Activated CD4-positive, alpha-beta T cell treated with anti-CD3 and anti-CD28 coated beads, Interleukin-2, amount 10 ng/mL, durations not matched to agents 24 days and 14 days (primary cell): ENCODE measurements at regions of chr5 and their contacts with region 1.

Region 1: GRCh38 chr5:35815089-35815936 is 41.4 kb upstream of the IL7R start:
- DNase-seq: peak; percentile 83
- H3K4me3 Mint-ChIP-seq: no peak overlapping the region
- H3K27ac Mint-ChIP-seq: no peak overlapping the region
- H3K4me1 Mint-ChIP-seq: peaks cover 34% of the 10 kb centered on the region
- H3K27me3 Mint-ChIP-seq: no peaks in the 10 kb centered on the region

Region 2: DNA sequence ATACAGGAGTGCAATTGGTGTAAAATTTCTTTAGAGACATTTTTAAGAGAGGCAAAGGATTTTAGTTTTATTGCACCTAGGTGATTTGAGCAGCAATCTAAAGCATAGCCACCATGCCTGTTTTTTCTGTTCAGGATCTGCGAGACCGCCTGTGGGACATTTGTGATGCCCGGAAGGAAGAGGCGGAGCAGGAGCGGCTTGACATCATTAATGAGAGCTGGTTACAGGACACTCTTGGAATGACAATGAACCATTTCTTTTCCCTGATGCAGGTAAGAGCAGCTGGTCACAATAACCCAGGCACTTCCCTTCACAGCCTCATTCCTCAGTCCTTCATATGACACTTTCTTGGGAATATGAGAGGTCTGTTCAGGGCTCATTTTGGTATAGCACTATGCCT is 61.8 kb before region 1 on chr5:
- intact Hi-C with region 1: no loop called
- DNase-seq: no peak
- H3K4me3 Mint-ChIP-seq: no peak overlapping the region
- H3K27ac Mint-ChIP-seq: no peak overlapping the region
- H3K4me1 Mint-ChIP-seq: peaks cover 9% of the 10 kb centered on the region
- H3K27me3 Mint-ChIP-seq: no peaks in the 10 kb centered on the region

Region 3: DNA sequence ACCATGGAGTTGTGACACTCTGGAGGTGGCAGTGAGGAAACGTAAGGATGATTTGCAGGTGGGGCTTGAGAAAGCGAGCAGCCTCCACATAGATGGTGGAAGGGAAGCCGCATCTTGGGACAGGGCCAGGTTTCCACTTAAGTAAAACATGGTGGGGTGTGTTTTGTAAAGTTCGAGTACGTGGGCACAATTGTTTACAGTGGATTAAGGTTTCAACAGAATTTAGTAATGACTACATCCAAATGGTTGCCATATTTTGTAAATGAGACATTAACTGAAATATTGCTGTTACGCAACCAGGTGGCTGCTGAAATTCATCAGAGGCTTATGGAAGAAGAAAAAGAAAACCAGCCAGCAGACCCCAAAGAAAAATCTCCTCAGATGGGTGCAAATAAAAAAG is 44.0 kb before region 1 on chr5:
- intact Hi-C with region 1: loop called (anchors 1 kb)
- DNase-seq: peak; percentile 40
- H3K4me3 Mint-ChIP-seq: no peak overlapping the region
- H3K27ac Mint-ChIP-seq: no peak overlapping the region
- H3K4me1 Mint-ChIP-seq: peaks cover 20% of the 10 kb centered on the region
- H3K27me3 Mint-ChIP-seq: no peaks in the 10 kb centered on the region

Region 4: DNA sequence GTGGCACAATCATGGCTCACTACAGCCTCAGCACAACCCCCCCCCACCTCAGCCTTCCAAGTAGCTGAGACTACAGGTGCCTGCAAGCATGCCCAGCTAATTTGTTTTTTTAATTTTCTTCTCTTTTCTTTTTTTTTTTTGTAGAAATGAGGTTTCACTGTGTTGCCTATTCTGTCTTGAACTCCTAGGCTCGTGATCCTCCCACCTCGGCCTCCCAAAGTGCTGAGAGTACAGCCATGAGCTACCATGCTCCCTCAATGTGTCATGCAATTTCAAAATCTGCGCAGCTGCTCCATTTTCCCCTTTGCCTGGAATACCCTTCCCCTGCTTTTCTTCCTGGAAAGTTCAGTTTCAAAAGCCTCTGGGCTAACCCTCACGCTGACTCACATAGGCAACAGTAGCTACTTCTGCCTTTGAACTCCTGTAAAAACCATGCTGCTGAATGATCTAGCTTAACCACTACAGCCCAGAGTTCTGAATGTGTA is 29.7 kb before region 1 on chr5:
- intact Hi-C with region 1: loop called (anchors 2 kb)
- DNase-seq: peak; percentile 81
- H3K4me3 Mint-ChIP-seq: peak overlapping the region; percentile 46
- H3K27ac Mint-ChIP-seq: peak overlapping the region; percentile 84
- H3K4me1 Mint-ChIP-seq: peaks cover 66% of the 10 kb centered on the region
- H3K27me3 Mint-ChIP-seq: no peaks in the 10 kb centered on the region

Region 5: GRCh38 chr5:35799753-35800152 is 15.6 kb before region 1 on chr5:
- intact Hi-C with region 1: loop called (anchors 1 kb)
- DNase-seq: peak; percentile 49
- H3K4me3 Mint-ChIP-seq: no peak overlapping the region
- H3K27ac Mint-ChIP-seq: no peak overlapping the region
- H3K4me1 Mint-ChIP-seq: peaks cover 55% of the 10 kb centered on the region
- H3K27me3 Mint-ChIP-seq: no peaks in the 10 kb centered on the region

Region 6: DNA sequence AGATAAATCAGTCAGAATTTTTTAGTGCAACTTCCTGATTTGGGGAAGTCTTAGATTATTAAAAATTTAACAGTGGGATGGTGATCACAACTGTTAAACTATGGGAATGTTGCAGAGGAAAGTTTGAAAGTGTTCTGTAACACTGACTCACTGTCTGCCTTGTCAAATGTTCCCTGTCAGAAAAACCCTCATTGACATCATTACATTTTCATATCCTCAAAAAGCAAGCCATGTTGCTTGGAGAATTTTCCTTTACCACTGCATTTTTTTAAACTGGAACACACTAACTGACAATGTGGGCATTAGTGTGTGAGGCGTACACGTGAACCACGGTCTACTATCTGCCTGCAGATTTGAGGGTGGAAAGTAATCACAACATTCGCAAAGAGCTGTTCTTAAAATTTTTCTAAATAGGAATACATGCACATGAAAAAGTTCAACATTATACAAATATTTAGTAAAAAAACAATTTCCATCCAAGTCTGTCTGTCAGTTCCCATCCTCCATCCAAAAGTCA is 12.8 kb after region 1 on chr5:
- intact Hi-C with region 1: loop called (anchors 1 kb)
- DNase-seq: peak; percentile 61
- H3K4me3 Mint-ChIP-seq: peak overlapping the region; percentile 34
- H3K27ac Mint-ChIP-seq: peak overlapping the region; percentile 98
- H3K4me1 Mint-ChIP-seq: peaks cover 80% of the 10 kb centered on the region
- H3K27me3 Mint-ChIP-seq: no peaks in the 10 kb centered on the region